OCI-LY7 (cell line): ENCODE measurements at regions of chr5 and their contacts with region 1.

Region 1: DNA sequence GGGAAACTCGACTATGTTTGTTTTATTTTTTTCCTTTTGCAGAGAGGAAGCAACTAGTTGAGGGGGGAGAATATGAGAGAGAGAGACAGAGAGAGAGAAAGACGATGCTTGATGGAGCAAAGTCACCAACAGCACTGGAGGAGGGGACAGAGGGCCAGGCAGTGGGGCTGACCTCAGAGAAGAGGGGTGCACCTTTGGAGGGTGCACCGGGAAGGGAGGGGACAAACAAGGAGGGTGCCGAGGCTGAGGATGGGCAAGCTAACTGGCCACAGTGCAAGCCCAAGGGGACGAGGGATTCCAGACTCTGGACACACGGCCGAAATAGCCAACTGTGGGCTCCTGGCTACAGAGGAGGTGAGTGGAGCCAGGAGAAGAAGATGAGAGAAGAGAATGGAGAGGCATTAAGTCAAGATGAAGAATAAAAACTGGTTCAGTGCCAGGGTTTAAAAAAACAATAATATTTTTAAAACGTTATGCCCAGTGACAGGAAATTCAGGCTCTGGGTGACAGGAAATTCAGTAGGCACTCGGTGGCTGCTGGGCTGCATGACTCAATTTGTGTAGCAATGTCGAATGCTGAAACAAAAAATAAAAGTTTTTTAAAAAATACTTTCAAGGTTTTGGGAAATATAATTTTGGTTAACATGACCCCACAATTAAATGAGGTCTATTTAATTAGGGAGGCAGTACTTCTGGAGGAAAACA is 13.3 kb upstream of the GLRX start:
- DNase-seq: no peak
- H3K4me3 ChIP-seq: peak overlapping the region; percentile 66
- H3K27ac ChIP-seq: no peak overlapping the region
- H3K4me1 ChIP-seq: peaks cover 37% of the 10 kb centered on the region
- CTCF ChIP-seq: no peak

Region 2: DNA sequence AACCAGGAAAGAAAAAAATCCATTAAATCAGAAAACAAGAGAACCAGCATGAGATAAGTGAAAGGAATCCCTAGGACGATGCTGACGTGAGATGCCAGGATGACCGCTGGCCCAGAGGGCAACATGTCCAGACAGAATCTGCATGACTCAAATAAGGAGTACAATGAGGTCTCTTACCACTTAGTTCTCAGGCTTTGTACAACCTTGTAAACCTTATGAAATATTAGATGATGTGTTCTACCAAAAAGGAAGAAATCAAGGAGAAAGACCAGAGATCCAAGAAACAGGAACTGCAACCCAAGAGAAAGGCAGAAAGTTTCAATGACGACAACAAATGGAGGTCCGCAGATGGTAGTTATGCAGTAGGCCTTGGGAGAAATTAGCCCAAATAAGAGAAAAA is 218.8 kb before region 1 on chr5:
- CTCF ChIA-PET with region 1: no interaction called
- POLR2A ChIA-PET with region 1: no interaction called
- intact Hi-C with region 1: no loop called
- DNase-seq: no peak
- H3K4me3 ChIP-seq: no peak overlapping the region
- H3K27ac ChIP-seq: no peak overlapping the region
- H3K4me1 ChIP-seq: no peaks in the 10 kb centered on the region
- CTCF ChIP-seq: no peak

Region 3: DNA sequence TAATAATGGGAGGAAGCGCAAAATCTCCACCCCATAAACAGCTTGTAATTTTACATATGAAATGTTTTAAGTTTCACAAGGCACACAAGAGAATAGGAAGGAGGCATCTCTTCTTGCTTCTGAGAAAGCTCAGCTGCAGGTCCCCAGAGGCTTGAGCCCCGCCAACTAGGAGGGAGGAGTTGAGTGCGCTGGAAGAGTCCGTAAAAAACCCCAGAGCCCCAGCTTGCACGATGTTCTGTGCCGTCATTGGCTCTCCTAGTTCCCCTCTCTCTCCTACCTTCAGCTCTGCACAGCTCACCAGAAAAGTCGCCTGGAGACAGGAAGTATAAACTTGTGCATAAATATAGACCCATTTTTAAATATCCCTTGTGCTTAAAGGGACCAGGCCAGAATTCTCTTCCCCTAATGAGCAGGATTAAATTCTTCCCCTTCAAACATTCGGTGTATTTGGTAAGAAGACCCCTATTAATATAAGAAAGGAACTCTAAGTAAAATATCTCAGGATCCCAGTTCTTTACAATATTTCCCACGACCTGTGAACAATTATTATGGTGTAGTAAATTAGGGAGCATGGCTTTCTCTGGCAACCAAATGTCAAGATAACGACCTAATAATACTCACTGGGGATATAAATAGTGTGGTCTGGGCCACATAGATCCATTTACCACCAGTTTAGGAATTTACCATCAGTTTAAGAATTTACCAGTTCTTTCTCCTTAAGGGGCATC is 27.0 kb before region 1 on chr5:
- CTCF ChIA-PET with region 1: no interaction called
- POLR2A ChIA-PET with region 1: interaction called, 12 read pairs
- intact Hi-C with region 1: loop called (anchors 1 kb)
- DNase-seq: peak; percentile 97
- H3K4me3 ChIP-seq: peak overlapping the region; percentile 53
- H3K27ac ChIP-seq: peak overlapping the region; percentile 80
- H3K4me1 ChIP-seq: peaks cover 34% of the 10 kb centered on the region
- CTCF ChIP-seq: no peak

Region 4: GRCh38 chr5:95822542-95823181 is 13.2 kb before region 1 on chr5 and contains the start of gene GLRX:
- CTCF ChIA-PET with region 1: interaction called, 5 read pairs
- POLR2A ChIA-PET with region 1: interaction called, 46 read pairs
- intact Hi-C with region 1: loop called (anchors 1 kb)
- DNase-seq: peak; percentile 82
- H3K4me3 ChIP-seq: peak within 1 kb of the TSS; percentile 91
- H3K27ac ChIP-seq: peak within 1 kb of the TSS; percentile 87
- H3K4me1 ChIP-seq: peaks cover 57% of the 10 kb centered on the region
- CTCF ChIP-seq: no peak
- total RNA-seq, gene GLRX: 26.7 and 80.5 TPM in 2 replicates

Region 5: GRCh38 chr5:96807075-96807654 is 971.3 kb after region 1 on chr5:
- CTCF ChIA-PET with region 1: no interaction called
- POLR2A ChIA-PET with region 1: no interaction called
- intact Hi-C with region 1: loop called (anchors 10 kb)
- DNase-seq: peak; percentile 55
- H3K4me3 ChIP-seq: peak overlapping the region; percentile 84
- H3K27ac ChIP-seq: peak overlapping the region; percentile 75
- H3K4me1 ChIP-seq: peaks cover 46% of the 10 kb centered on the region
- CTCF ChIP-seq: no peak